GM18951 (cell line): ENCODE measurements at regions of chr14 and their contacts with region 1.

Region 1: DNA sequence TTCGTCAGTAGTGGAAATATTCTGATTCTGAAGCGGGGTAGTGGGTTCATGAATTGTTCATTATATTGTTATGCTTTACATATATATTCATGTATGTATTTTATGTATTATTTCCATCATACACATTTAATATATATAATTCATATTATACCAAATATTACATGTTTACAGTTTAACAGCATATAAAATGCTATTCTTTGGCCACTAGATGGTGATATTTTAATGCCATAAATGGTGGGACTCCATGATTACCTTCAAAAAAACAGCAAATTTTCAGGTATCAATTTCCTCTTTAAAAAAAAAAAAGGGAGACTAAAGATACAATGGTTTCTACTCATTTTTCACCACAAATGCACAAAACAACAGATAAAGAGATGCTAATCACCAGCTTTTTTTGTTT is 41.0 kb downstream of the BDKRB1 start:
- POLR2A ChIP-seq: no peak

Region 2: GRCh38 chr14:96424109-96424989 is 127.3 kb after region 1 on chr14:
- in situ Hi-C with region 1: loop called (anchors 10 kb)
- POLR2A ChIP-seq: no peak